CD4-positive, alpha-beta memory T cell (primary cell): ENCODE measurements at regions of chr10 and their contacts with region 1.

Region 1: DNA sequence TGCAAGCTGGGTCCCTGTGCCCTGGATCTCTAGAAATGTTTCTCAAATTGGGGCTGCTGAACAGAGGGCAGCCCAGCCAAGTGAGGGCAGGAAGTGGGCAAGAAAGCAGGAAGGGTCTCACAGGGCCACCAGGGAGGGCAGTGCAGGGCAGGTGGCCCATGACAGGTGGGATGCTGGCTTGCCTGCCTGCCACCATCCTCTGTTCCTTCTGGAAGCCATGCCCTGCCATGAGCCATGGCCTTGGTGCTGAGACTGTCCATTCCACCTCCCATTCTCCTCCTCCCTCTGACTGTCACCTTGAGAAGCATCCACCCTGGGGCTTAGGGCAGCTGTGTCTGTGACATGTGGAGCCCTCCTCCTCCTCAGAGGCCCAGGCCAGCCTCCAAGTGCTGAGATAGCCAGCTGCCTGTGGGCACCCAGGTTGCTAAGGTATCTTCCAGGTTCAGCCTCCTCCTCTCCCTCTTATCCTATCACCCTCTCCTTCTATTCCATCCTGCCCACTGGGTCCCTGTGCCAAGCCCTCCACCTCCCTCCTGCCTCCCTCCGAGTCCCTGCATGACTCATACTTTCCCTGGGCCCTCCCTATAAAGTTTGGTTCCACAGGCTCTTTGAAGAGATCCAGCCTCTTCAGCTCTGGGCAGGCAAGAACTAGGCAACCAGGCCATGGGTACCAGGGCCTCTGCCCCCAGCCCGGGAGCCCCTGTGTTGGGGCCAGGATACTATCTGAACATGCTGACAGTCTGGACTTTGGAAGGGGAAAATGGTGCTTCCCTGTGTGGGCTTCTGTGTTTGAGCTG is 1.3 kb downstream of the VSIR start:
- DNase-seq: peak in 1 of 5 donors; percentile 82
- H3K4me3 ChIP-seq: peak overlapping the region; percentile 84 to 95
- H3K4me3 Mint-ChIP-seq: peak overlapping the region; percentile 95 to 97 (median 95)
- H3K27ac ChIP-seq: peak overlapping the region; percentile 93
- H3K27ac Mint-ChIP-seq: peak overlapping the region; percentile 92 to 99 (median 95)
- H3K4me1 ChIP-seq: peaks cover 84% of the 10 kb centered on the region
- H3K4me1 Mint-ChIP-seq: peaks cover 55 to 91% (median 69%) of the 10 kb centered on the region in 4 donors
- H3K27me3 ChIP-seq: no peaks in the 10 kb centered on the region
- H3K27me3 Mint-ChIP-seq: no peaks in the 10 kb centered on the region

Region 2: GRCh38 chr10:70815504-70816219 is 956.4 kb before region 1 on chr10 and contains the start of gene SGPL1:
- CTCF ChIA-PET with region 1: no interaction called
- POLR2A ChIA-PET with region 1: no interaction called
- intact Hi-C with region 1: loop called (anchors 10 kb)
- DNase-seq: peak; percentile 74 to 87 (median 83)
- H3K4me3 ChIP-seq: peak within 1 kb of the TSS; percentile 26 to 72
- H3K4me3 Mint-ChIP-seq: peak within 1 kb of the TSS; percentile 87 to 95 (median 92)
- H3K27ac ChIP-seq: peak within 1 kb of the TSS; percentile 44
- H3K27ac Mint-ChIP-seq: peak within 1 kb of the TSS; percentile 87 to 96 (median 91)
- H3K4me1 ChIP-seq: peaks cover 28% of the 10 kb centered on the region
- H3K4me1 Mint-ChIP-seq: peaks cover 23 to 55% (median 39%) of the 10 kb centered on the region in 4 donors
- H3K27me3 ChIP-seq: no peaks in the 10 kb centered on the region
- H3K27me3 Mint-ChIP-seq: no peaks in the 10 kb centered on the region
- total RNA-seq, gene SGPL1: 29.6 to 32.2 TPM

Region 3: GRCh38 chr10:71383972-71384687 is 387.9 kb before region 1 on chr10:
- CTCF ChIA-PET with region 1: no interaction called
- POLR2A ChIA-PET with region 1: no interaction called
- intact Hi-C with region 1: loop called (anchors 2 kb)
- DNase-seq: peak; percentile 56 to 67 (median 60)
- H3K4me3 ChIP-seq: no peak overlapping the region
- H3K4me3 Mint-ChIP-seq: no peak overlapping the region
- H3K27ac ChIP-seq: no peak overlapping the region
- H3K27ac Mint-ChIP-seq: no peak overlapping the region
- H3K4me1 ChIP-seq: no peaks in the 10 kb centered on the region
- H3K4me1 Mint-ChIP-seq: peaks cover 0 to 3% (median 0%) of the 10 kb centered on the region in 4 donors
- H3K27me3 ChIP-seq: no peaks in the 10 kb centered on the region
- H3K27me3 Mint-ChIP-seq: peaks cover 2 to 3% of the 10 kb centered on the region in 2 donors

Region 4: GRCh38 chr10:71531485-71532446 is 240.3 kb before region 1 on chr10:
- CTCF ChIA-PET with region 1: no interaction called
- POLR2A ChIA-PET with region 1: no interaction called
- intact Hi-C with region 1: no loop called
- DNase-seq: peak in 1 of 5 donors; percentile 8
- H3K4me3 ChIP-seq: no peak overlapping the region
- H3K4me3 Mint-ChIP-seq: no peak overlapping the region
- H3K27ac ChIP-seq: no peak overlapping the region
- H3K27ac Mint-ChIP-seq: no peak overlapping the region
- H3K4me1 ChIP-seq: no peaks in the 10 kb centered on the region
- H3K4me1 Mint-ChIP-seq: peaks cover 2 to 5% (median 4%) of the 10 kb centered on the region in 4 donors
- H3K27me3 ChIP-seq: no peaks in the 10 kb centered on the region
- H3K27me3 Mint-ChIP-seq: no peaks in the 10 kb centered on the region

Region 5: DNA sequence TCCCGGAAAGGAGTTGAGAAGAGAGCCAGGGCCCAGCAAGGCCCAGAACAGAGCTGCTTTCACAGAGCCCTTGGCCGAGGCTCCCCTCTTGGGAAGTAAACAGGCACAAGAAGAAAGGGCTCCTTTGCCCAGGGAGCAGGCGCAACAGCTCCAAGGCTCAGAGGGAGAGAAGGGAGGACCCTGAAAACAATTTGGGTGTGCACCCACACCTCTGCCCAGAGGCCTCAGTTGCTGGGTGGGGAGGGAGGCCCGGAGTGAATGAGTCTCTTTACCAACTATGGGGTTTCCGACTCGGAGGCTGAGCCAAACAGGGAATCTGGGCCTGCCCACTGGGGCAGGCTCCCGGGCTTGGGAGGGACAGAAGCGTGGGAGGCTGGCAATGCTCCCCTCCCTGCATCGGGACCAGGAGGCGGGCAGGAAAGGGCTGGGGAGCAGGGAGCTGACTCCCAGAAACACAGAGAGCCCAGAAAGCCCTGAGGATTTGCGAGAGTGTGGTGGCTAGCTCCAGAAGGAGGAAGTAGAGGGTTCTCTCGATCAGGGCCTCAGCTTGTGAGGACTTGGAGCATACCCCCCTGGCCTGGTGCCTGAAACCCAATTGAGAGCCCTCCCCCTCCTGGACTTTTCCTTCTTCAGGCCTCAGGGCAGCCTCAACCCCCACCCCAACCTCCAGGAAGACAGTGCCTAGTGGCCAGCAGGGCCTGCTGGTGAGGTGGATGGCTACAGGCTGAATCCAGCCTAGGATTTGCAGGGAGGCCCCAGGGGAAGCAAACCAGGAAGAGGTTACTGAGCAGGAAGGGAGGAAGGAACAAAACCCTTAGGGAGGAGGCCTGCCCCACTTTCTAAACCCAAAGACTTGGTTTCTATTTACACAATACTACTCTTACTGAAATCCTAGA is 58.6 kb before region 1 on chr10:
- CTCF ChIA-PET with region 1: interaction called, 379 read pairs
- POLR2A ChIA-PET with region 1: interaction called, 62 read pairs
- intact Hi-C with region 1: no loop called
- DNase-seq: peak in 3 of 5 donors; percentile 35 to 51 (median 49)
- H3K4me3 ChIP-seq: peak overlapping the region; percentile 1 to 21
- H3K4me3 Mint-ChIP-seq: peak overlapping the region; percentile 76 to 93 (median 85)
- H3K27ac ChIP-seq: peak overlapping the region; percentile 69
- H3K27ac Mint-ChIP-seq: peak overlapping the region; percentile 96 to 99 (median 98)
- H3K4me1 ChIP-seq: peaks cover 62% of the 10 kb centered on the region
- H3K4me1 Mint-ChIP-seq: peaks cover 33 to 84% (median 62%) of the 10 kb centered on the region in 4 donors
- H3K27me3 ChIP-seq: no peaks in the 10 kb centered on the region
- H3K27me3 Mint-ChIP-seq: no peaks in the 10 kb centered on the region

Region 6: DNA sequence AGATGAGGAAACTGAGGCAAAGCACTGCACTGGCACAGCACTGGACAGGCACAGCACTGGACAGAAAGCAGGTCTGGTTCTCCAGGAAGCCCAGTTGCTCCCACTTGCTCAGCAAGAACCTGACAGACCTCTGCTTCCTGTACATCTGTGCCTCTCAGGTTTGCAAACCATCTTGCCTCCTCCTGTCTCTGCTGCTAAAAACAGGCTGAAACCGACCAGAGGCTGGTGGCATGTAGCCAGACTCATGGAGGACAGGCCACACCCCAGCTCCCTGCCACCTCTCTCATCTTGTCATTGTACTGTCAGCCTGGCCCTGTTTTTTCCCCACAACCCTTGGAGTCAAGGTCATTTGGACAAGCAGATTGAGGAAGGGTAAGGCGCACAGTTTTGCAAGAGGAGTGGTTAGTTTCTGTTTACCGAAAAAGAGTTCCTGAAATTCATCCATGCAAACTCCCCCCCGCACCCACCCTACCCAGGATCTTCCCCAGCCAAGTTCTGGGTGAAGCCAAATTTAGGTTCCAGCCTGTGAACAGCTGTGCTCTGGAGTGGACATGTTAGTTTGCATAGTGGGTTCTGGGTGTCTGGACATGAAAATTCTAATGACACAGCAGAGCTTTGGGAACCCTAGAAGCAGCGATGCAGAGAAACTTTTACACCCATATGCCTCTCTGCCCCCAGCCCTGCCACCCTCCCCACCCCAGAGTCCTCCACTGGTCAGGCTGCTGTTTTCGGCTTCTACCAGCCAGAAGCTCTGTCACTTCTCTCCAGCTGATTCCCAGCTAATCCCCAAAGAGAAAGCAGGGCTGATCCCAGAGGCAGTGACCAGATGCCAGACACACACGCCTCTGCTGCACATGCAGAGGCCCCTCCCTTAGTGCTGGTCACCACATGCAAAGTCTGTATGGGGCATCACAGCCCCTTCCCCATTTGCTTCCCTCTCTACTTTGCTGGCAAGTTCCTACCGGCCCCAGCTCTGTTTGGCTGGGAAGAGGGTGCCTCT is 44.0 kb before region 1 on chr10:
- CTCF ChIA-PET with region 1: interaction called, 174 read pairs
- POLR2A ChIA-PET with region 1: interaction called, 444 read pairs
- intact Hi-C with region 1: loop called (anchors 1 kb)
- DNase-seq: peak; percentile 84 to 91 (median 88)
- H3K4me3 ChIP-seq: peak overlapping the region in 1 of 2 donors; percentile 49
- H3K4me3 Mint-ChIP-seq: peak overlapping the region; percentile 75 to 87 (median 80)
- H3K27ac ChIP-seq: peak overlapping the region; percentile 73
- H3K27ac Mint-ChIP-seq: peak overlapping the region; percentile 96 to 99 (median 98)
- H3K4me1 ChIP-seq: peaks cover 97% of the 10 kb centered on the region
- H3K4me1 Mint-ChIP-seq: peaks cover 54 to 95% (median 76%) of the 10 kb centered on the region in 4 donors
- H3K27me3 ChIP-seq: no peaks in the 10 kb centered on the region
- H3K27me3 Mint-ChIP-seq: no peaks in the 10 kb centered on the region

Region 7: DNA sequence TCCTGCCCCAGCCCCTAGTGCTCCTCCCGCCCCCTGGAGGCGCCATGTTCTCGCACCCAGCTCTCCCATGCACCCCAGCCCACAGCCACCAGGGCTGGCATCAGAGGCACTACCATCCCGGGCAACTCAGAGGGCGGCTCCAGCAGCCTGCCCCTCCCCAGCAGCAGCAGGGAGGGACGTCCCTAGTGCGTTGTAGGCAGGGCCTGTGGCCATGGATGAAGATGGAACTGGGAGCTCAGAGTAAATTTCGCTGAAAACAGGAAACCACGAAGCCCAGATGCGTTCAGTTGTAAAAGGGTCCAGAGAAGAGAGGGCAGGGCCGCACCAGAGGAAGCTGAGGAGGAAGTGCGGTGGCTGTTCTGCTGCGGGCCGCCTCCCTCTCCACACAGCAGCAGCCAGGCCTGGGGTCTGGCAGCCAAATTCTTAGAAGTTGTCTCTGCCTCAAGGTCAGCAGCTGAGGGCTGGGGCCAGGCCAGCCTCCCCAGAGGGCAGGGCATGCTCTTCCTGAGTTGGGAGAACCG is 23.3 kb before region 1 on chr10:
- CTCF ChIA-PET with region 1: interaction called, 46 read pairs
- POLR2A ChIA-PET with region 1: interaction called, 1,035 read pairs
- intact Hi-C with region 1: loop called (anchors 1 kb)
- DNase-seq: peak; percentile 86 to 90 (median 87)
- H3K4me3 ChIP-seq: peak overlapping the region in 1 of 2 donors; percentile 39
- H3K4me3 Mint-ChIP-seq: peak overlapping the region; percentile 76 to 89 (median 84)
- H3K27ac ChIP-seq: peak overlapping the region; percentile 58
- H3K27ac Mint-ChIP-seq: peak overlapping the region; percentile 92 to 99 (median 98)
- H3K4me1 ChIP-seq: peaks cover 100% of the 10 kb centered on the region
- H3K4me1 Mint-ChIP-seq: peaks cover 74 to 98% (median 92%) of the 10 kb centered on the region in 4 donors
- H3K27me3 ChIP-seq: no peaks in the 10 kb centered on the region
- H3K27me3 Mint-ChIP-seq: no peaks in the 10 kb centered on the region

Region 8: DNA sequence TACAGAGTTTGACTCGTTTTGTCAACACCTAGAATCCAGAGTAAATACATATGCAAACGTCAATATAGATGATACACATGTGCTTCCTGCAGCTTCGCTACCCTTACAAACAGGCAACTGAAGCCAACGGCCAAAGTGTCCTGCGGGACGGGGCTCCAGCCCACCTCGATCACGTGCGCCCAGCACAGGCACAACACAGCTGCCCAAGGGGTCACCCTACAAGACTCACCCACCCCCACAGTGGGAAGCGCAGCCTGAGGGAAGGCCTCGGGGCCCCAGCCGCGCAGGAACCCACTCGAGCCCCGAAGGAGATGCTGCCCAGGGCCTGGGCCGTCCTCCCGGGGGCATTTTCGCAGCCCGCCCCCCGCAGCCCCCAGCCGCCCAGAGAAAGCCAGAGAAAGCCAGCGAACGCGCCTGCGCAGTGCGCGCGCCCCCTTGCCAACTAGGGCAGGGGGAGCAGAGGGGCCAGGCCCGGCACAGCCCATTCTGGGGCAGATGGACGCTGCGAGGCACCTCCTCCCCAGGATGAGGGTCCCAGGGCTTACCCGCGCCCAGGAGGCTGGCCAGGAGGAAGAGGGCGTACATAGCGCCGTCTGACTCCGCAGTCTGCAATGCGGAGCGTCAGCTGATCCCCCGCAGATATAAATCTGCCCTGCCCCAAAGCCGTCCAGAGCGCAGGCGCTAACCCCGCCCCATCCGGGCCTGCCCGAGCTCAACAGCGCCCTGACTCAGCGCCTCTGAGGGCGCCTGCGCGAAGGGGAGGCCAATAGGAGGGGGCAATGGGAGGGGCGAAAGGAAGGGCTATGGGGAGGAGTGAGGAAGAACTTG is 78.8 kb after region 1 on chr10 and contains the start of gene PSAP:
- CTCF ChIA-PET with region 1: no interaction called
- POLR2A ChIA-PET with region 1: interaction called, 11 read pairs
- intact Hi-C with region 1: loop called (anchors 2 kb)
- DNase-seq: peak; percentile 97 to 98 (median 97)
- H3K4me3 ChIP-seq: peak within 1 kb of the TSS; percentile 98 to 99
- H3K4me3 Mint-ChIP-seq: peak within 1 kb of the TSS; percentile 92 to 99 (median 97)
- H3K27ac ChIP-seq: peak within 1 kb of the TSS; percentile 81
- H3K27ac Mint-ChIP-seq: peak within 1 kb of the TSS; percentile 84 to 96 (median 92)
- H3K4me1 ChIP-seq: peaks cover 21% of the 10 kb centered on the region
- H3K4me1 Mint-ChIP-seq: peaks cover 28 to 51% (median 38%) of the 10 kb centered on the region in 4 donors
- H3K27me3 ChIP-seq: no peaks in the 10 kb centered on the region
- H3K27me3 Mint-ChIP-seq: no peaks in the 10 kb centered on the region
- total RNA-seq, gene PSAP: 248 to 257 TPM